ENCODE measurements at regions of chr3 and their contacts with region 1.

Region 1: GRCh38 chr3:52220380-52221026 is 4.9 kb downstream of the TLR9 start:
- DNase-seq: peak; percentile 62 to 76
- ATAC-seq: peak; percentile 80 to 92
- H3K4me3 ChIP-seq: no peak overlapping the region
- H3K27ac ChIP-seq: no peak overlapping the region
- H3K4me1 ChIP-seq: peaks cover 8% of the 10 kb centered on the region; the same call in 2 of the 3 replicates
- CTCF ChIP-seq: peak; percentile 76
- EP300 ChIP-seq: no peak
- POLR2A ChIP-seq: no peak
- RAD21 ChIP-seq: peak; percentile 52 to 69; a peak in 4 of 5 replicates

Region 2: DNA sequence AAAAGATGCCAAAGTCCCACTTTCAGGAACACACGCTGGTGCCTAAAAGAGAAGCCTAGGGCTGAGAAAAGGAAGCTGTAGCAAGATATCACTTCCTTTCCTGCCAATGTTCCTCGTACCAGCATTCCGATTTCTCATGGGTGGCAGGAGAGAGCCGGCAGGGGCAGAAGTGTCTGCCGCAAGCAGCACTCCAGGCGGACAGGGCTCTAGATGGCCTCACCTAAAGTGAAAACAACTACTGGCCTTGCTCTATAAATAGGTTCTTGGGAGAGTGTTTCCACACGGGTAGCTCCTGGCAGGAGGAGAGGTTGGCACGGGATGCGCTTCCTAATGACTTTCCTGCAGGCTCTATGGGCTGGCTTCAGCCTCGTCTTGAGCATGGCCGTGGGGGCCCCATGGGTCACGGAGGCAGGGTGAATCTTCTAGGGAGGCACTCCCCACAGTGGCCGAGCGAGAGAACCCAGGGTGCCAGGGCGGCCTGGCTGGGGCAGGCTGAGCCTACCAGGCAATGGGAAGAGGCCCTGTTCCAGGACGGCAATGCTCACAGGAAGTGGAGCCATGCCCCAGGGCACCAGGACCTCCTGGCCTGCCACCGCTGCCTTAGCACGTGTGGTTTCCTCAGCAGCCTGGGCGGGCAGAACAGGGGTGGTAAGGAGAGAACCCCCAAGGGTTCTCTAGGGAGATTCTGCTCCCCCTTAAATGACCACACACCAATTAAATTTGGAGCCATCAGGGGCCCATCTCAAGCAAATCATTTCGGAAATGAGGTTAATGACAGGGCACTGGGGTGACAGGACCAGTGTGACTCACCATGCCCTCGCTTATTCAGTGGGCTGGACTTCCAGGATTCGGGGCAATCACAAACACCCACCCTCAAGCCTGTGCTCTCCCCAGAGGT is 149.5 kb before region 1 on chr3:
- CTCF ChIA-PET with region 1: no interaction called
- POLR2A ChIA-PET with region 1: no interaction called
- DNase-seq: no peak
- ATAC-seq: no peak
- H3K4me3 ChIP-seq: no peak overlapping the region
- H3K27ac ChIP-seq: no peak overlapping the region
- H3K4me1 ChIP-seq: no peaks in the 10 kb centered on the region
- CTCF ChIP-seq: no peak
- EP300 ChIP-seq: no peak
- POLR2A ChIP-seq: no peak
- RAD21 ChIP-seq: no peak

Region 3: DNA sequence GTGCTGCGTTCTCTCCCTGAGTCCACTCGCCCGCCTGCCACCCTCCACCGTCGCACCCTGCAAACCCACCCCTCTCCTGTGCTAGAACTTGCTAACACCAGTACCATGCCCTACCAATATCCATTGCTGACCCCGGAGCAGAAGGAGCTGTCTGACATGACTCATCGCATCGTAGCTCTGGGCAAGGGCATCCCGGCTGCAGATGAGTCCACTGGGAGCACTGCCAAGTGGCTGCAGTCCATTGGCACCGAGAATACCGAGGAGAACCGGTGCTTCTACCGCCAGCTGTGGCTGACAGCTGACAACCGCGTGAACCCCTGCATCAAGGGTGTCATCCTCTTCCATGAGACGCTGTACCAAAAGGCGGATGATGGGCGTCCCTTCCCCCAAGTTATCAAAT is 27.4 kb before region 1 on chr3:
- CTCF ChIA-PET with region 1: interaction called, 24 read pairs
- POLR2A ChIA-PET with region 1: no interaction called
- DNase-seq: peak; percentile 40 to 43
- ATAC-seq: peak; percentile 29 to 50; a peak in 3 of 6 replicates
- H3K4me3 ChIP-seq: no peak overlapping the region
- H3K27ac ChIP-seq: 0 out of 6 replicates have a peak overlapping the region, but pooled peaks of 1 of the 2 experiments have one; percentile 37
- H3K4me1 ChIP-seq: peaks cover 24% of the 10 kb centered on the region
- CTCF ChIP-seq: no peak
- EP300 ChIP-seq: no peak
- POLR2A ChIP-seq: no peak
- RAD21 ChIP-seq: no peak

Region 4: GRCh38 chr3:52204337-52205073 is 16.0 kb before region 1 on chr3:
- CTCF ChIA-PET with region 1: interaction called, 119 read pairs
- POLR2A ChIA-PET with region 1: no interaction called
- DNase-seq: no peak
- ATAC-seq: no peak
- H3K4me3 ChIP-seq: no peak overlapping the region
- H3K27ac ChIP-seq: no peak overlapping the region
- H3K4me1 ChIP-seq: peaks cover 1% of the 10 kb centered on the region; the same call in 2 of the 3 replicates
- CTCF ChIP-seq: no peak
- EP300 ChIP-seq: no peak
- POLR2A ChIP-seq: no peak
- RAD21 ChIP-seq: no peak

Region 5: DNA sequence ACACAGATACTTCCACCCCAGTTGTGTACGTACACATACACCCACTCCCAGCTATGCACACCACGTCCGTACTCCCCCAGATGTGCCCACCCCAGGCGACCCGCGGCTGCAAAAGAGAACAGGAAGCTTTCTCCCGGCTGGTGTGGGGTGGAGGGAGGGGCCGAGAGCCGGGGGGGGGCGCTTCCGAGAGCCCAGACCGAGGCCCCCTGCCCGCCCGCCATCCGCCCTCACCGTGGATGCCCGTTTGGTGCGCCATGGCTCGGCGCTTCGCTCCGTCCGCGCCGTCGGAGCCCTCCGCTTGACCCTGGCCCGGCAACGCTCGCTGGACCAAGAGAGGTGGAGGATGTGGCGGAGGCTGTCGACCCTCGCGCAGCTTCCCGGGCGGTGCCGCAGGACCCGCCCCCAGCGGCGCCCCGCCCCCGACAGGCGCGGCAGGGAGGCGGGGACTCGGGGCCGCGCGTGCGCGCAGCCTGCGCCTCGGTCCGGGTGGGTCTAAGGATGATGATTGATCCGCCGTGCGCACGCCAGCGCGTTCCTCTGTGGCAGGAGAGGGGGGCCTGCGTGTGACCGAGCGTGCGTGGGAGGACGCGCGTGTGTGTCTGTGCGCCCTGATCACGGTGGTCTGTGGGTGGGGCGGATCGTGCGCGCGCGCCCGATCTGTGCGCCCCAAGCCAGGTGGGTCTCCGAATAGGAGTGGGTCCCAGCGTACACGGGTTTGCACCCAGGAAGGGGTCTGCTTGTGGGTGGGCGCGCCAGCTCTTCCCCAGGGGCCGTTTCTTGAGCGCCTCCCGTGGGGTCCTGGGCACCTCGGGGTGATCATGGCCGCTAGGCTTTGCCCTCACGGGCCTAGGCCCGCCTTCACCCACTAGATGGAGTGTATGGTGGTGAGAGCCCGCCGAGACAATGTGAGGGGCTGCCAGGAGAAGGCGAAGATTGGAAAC is 18.5 kb after region 1 on chr3 and contains the start of gene TWF2:
- CTCF ChIA-PET with region 1: interaction called, 198 read pairs
- POLR2A ChIA-PET with region 1: interaction called, 3 read pairs
- DNase-seq: peak; percentile 59 to 80
- ATAC-seq: peak; percentile 70 to 83
- H3K4me3 ChIP-seq: peak within 1 kb of the TSS; percentile 96
- H3K27ac ChIP-seq: peak within 1 kb of the TSS; percentile 98
- H3K4me1 ChIP-seq: peaks cover 32% of the 10 kb centered on the region
- CTCF ChIP-seq: 0 out of 3 replicates have a peak, but pooled peaks have one; percentile 15
- EP300 ChIP-seq: no peak
- POLR2A ChIP-seq: peak; percentile 81
- RAD21 ChIP-seq: no peak
- polyA plus RNA-seq, gene TWF2: 36.8 and 46.3 TPM in 2 replicates

Region 6: DNA sequence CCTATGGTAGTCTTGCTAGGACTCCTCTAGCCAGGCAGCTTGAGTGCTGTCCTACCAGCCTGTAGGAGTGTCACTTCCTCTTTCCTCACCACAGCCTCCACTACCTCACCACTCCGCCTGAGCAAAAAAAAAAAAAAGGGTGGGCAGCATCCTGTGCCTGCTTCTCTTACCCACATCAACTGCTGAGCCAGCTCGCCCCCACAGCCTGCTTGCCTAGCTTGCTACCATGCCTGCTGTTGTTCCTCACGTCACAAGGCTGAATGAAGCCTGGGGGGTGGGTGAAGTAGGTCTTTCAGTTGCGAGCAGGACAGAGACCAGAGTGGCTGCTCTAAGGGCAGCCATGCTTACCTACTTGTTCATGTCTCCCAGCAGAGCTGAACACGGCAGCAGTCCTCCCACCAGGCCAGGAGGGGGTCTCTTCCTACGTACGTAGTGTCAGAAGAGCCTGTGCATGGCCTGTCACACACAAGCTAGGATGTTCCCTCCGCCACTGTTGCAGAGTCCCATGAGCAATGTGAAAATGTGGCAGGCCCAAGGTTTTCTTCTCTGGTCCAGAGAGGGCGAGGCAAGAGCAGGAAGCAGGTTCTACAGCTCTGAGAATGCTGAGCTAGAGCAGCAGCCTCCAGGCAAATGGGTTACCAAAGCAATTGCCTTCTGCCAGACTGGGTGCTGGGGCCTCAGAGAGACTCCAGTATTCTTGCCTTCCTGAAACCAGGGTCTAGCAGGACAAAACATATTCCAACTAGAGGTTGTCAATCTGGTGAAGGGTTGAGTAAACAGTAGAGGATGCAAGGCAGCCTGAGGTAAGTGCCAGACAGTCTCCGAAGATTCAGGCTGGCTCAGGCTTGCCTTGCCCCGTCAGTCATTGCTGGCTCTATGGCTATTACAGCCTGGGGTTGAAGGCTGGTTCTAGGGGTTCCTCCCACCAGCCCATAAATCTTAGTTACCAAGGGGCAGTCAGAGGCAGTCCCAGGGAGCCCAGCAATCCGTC is 33.1 kb after region 1 on chr3:
- CTCF ChIA-PET with region 1: interaction called, 12 read pairs
- POLR2A ChIA-PET with region 1: no interaction called
- DNase-seq: no peak
- ATAC-seq: no peak
- H3K4me3 ChIP-seq: no peak overlapping the region
- H3K27ac ChIP-seq: no peak overlapping the region
- H3K4me1 ChIP-seq: no peaks in the 10 kb centered on the region
- CTCF ChIP-seq: no peak
- EP300 ChIP-seq: no peak
- POLR2A ChIP-seq: no peak
- RAD21 ChIP-seq: no peak

Region 7: GRCh38 chr3:52333869-52334557 is 113.5 kb after region 1 on chr3:
- CTCF ChIA-PET with region 1: interaction called, 50 read pairs
- POLR2A ChIA-PET with region 1: no interaction called
- DNase-seq: peak in 1 of 2 experiments; percentile 27
- ATAC-seq: peak in 1 of 2 experiments; percentile 60; a peak in 3 of 6 replicates
- H3K4me3 ChIP-seq: no peak overlapping the region
- H3K27ac ChIP-seq: no peak overlapping the region
- H3K4me1 ChIP-seq: peaks cover 11% of the 10 kb centered on the region; the same call in 2 of the 3 replicates
- CTCF ChIP-seq: no peak
- EP300 ChIP-seq: no peak
- POLR2A ChIP-seq: no peak
- RAD21 ChIP-seq: no peak

Measured in A549 (cell line).